ENCODE measurements at regions of chr15 and their contacts with region 1.

Region 1: GRCh38 chr15:89206908-89207331 is 14.5 kb downstream of the RLBP1 start:
- DNase-seq: peak; percentile 77
- ATAC-seq: peak; percentile 80
- H3K4me3 Mint-ChIP-seq: peak overlapping the region; percentile 23
- H3K27ac Mint-ChIP-seq: peak overlapping the region; percentile 29
- H3K4me1 Mint-ChIP-seq: peaks cover 44% of the 10 kb centered on the region
- H3K27me3 Mint-ChIP-seq: peaks cover 9% of the 10 kb centered on the region

Region 2: GRCh38 chr15:89101302-89102191 is 105.4 kb before region 1 on chr15:
- CTCF ChIA-PET with region 1: no interaction called
- POLR2A ChIA-PET with region 1: no interaction called
- DNase-seq: no peak
- ATAC-seq: no peak
- H3K4me3 Mint-ChIP-seq: no peak overlapping the region
- H3K27ac Mint-ChIP-seq: no peak overlapping the region
- H3K4me1 Mint-ChIP-seq: peaks cover 8% of the 10 kb centered on the region
- H3K27me3 Mint-ChIP-seq: no peaks in the 10 kb centered on the region

Region 3: GRCh38 chr15:89171136-89172072 is 35.5 kb before region 1 on chr15:
- CTCF ChIA-PET with region 1: interaction called, 18 read pairs
- POLR2A ChIA-PET with region 1: no interaction called
- DNase-seq: peak; percentile 47
- ATAC-seq: no peak
- H3K4me3 Mint-ChIP-seq: no peak overlapping the region
- H3K27ac Mint-ChIP-seq: no peak overlapping the region
- H3K4me1 Mint-ChIP-seq: peaks cover 12% of the 10 kb centered on the region
- H3K27me3 Mint-ChIP-seq: no peaks in the 10 kb centered on the region

Region 4: GRCh38 chr15:89184357-89184756 is 22.6 kb before region 1 on chr15:
- CTCF ChIA-PET with region 1: interaction called, 22 read pairs
- POLR2A ChIA-PET with region 1: no interaction called
- DNase-seq: no peak
- ATAC-seq: no peak
- H3K4me3 Mint-ChIP-seq: no peak overlapping the region
- H3K27ac Mint-ChIP-seq: no peak overlapping the region
- H3K4me1 Mint-ChIP-seq: no peaks in the 10 kb centered on the region
- H3K27me3 Mint-ChIP-seq: no peaks in the 10 kb centered on the region

Region 5: DNA sequence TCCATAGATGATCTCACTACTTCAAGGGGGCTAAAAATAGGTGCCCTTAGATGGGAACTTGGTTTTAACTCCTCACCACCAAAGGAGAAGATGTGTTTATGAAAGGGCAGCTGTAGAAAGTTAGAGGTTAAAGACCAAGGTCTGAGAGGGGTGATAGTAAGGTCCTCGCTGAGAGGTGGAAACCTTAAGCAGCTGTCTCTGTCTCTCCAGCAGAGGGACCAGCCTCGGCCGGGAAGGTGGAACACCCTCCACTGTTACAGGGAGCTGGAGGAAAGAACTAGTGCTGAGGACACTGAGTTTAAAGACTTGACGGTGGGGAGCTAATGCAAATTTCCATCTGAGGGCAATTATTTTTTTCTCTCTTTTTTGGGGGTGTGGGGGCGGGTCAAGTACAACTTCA is 23.4 kb after region 1 on chr15:
- CTCF ChIA-PET with region 1: interaction called, 39 read pairs
- POLR2A ChIA-PET with region 1: no interaction called
- DNase-seq: no peak
- ATAC-seq: no peak
- H3K4me3 Mint-ChIP-seq: no peak overlapping the region
- H3K27ac Mint-ChIP-seq: no peak overlapping the region
- H3K4me1 Mint-ChIP-seq: peaks cover 8% of the 10 kb centered on the region
- H3K27me3 Mint-ChIP-seq: peaks cover 28% of the 10 kb centered on the region

Region 6: GRCh38 chr15:89278307-89278706 is 71.4 kb after region 1 on chr15:
- CTCF ChIA-PET with region 1: interaction called, 17 read pairs
- POLR2A ChIA-PET with region 1: no interaction called
- DNase-seq: no peak
- ATAC-seq: no peak
- H3K4me3 Mint-ChIP-seq: no peak overlapping the region
- H3K27ac Mint-ChIP-seq: no peak overlapping the region
- H3K4me1 Mint-ChIP-seq: no peaks in the 10 kb centered on the region
- H3K27me3 Mint-ChIP-seq: no peaks in the 10 kb centered on the region

Region 7: GRCh38 chr15:89305395-89305794 is 98.5 kb after region 1 on chr15:
- CTCF ChIA-PET with region 1: interaction called, 22 read pairs
- POLR2A ChIA-PET with region 1: no interaction called
- DNase-seq: no peak
- ATAC-seq: no peak
- H3K4me3 Mint-ChIP-seq: no peak overlapping the region
- H3K27ac Mint-ChIP-seq: no peak overlapping the region
- H3K4me1 Mint-ChIP-seq: peaks cover 9% of the 10 kb centered on the region
- H3K27me3 Mint-ChIP-seq: no peaks in the 10 kb centered on the region